ENCODE measurements at regions of chr2 and their contacts with region 1.

Region 1: GRCh38 chr2:47386551-47386950 is 16.4 kb upstream of the MSH2 start:
- DNase-seq: no peak
- ATAC-seq: no peak
- H3K4me3 ChIP-seq: no peak overlapping the region
- H3K27ac ChIP-seq: no peak overlapping the region
- H3K4me1 ChIP-seq: no peaks in the 10 kb centered on the region
- H3K27me3 ChIP-seq: no peaks in the 10 kb centered on the region
- CTCF ChIP-seq: no peak

Region 2: GRCh38 chr2:47334356-47335136 is 52.0 kb before region 1 on chr2:
- CTCF ChIA-PET with region 1: interaction called, 128 read pairs
- POLR2A ChIA-PET with region 1: interaction called, 7 read pairs
- in situ Hi-C with region 1: no loop called
- intact Hi-C with region 1: loop called (anchors 1 kb)
- DNase-seq: no peak
- ATAC-seq: 0 out of 2 replicates have a peak, but pooled peaks have one; percentile 22
- H3K4me3 ChIP-seq: no peak overlapping the region
- H3K27ac ChIP-seq: no peak overlapping the region
- H3K4me1 ChIP-seq: no peaks in the 10 kb centered on the region
- H3K27me3 ChIP-seq: no peaks in the 10 kb centered on the region
- CTCF ChIP-seq: no peak

Region 3: GRCh38 chr2:47339745-47340541 is 46.6 kb before region 1 on chr2:
- CTCF ChIA-PET with region 1: interaction called, 128 read pairs
- POLR2A ChIA-PET with region 1: interaction called, 10 read pairs
- in situ Hi-C with region 1: no loop called
- intact Hi-C with region 1: loop called (anchors 1 kb)
- DNase-seq: no peak
- ATAC-seq: no peak
- H3K4me3 ChIP-seq: no peak overlapping the region
- H3K27ac ChIP-seq: no peak overlapping the region
- H3K4me1 ChIP-seq: no peaks in the 10 kb centered on the region
- H3K27me3 ChIP-seq: no peaks in the 10 kb centered on the region
- CTCF ChIP-seq: no peak

Region 4: DNA sequence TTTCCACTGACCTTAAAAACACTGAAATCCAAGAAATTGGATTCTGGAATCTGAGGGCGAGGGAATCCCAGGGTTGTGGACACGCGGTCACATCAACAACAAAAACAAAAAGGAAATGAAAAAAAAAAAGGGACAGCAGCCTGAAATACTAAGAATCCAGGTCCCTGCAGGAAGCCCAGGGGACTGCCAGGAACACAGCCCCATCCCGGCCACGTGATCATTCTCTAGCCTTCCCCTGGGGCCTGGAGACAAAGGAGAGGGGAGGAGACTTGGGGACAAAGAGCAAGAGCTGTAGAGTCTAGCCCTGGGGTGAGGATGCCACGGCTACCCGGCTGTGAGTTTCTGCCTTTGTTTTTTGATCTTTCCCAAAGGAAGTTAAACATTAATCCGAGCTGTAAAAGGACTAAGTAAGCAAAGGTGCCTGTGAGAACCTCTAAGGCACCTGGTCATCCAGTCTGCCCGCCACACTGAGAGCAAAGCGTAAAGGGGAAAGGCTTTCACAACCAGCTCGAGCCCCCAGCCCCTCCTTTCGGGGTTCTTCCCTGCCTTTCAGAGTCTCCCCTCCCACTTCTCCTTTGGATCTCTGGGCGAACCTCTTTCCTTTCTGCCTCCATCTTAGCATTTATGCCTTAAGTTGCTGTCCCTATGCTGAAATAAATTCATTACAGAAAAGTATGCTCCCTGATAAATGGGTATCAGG is 41.5 kb before region 1 on chr2:
- CTCF ChIA-PET with region 1: interaction called, 14 read pairs
- POLR2A ChIA-PET with region 1: interaction called, 10 read pairs
- in situ Hi-C with region 1: no loop called
- intact Hi-C with region 1: no loop called
- DNase-seq: no peak
- ATAC-seq: peak; percentile 99
- H3K4me3 ChIP-seq: peak overlapping the region; percentile 50 to 75
- H3K27ac ChIP-seq: peak overlapping the region; percentile 98
- H3K4me1 ChIP-seq: peaks cover 14% of the 10 kb centered on the region
- H3K27me3 ChIP-seq: no peaks in the 10 kb centered on the region
- CTCF ChIP-seq: no peak

Region 5: GRCh38 chr2:47373747-47374146 is 12.8 kb before region 1 on chr2:
- CTCF ChIA-PET with region 1: interaction called, 11 read pairs
- POLR2A ChIA-PET with region 1: no interaction called
- in situ Hi-C with region 1: no loop called
- intact Hi-C with region 1: no loop called
- DNase-seq: no peak
- ATAC-seq: peak; percentile 47; the same call in 1 of the 2 replicates
- H3K4me3 ChIP-seq: no peak overlapping the region
- H3K27ac ChIP-seq: no peak overlapping the region
- H3K4me1 ChIP-seq: 0 out of 2 replicates have a peak, but pooled peaks cover under 1% of the 10 kb centered on the region
- H3K27me3 ChIP-seq: no peaks in the 10 kb centered on the region
- CTCF ChIP-seq: no peak; the same call in 1 of the 2 replicates

Measured in Panc1 (cell line).